Sciatic nerve (tissue), 2 donors: ENCODE measurements at regions of chr17 and their contacts with region 1.

Region 1: GRCh38 chr17:2029911-2030778 is at the start of gene DPH1:
- DNase-seq: peak; percentile 95
- ATAC-seq: peak; percentile 93
- total RNA-seq, gene DPH1: 37.7 TPM

Region 2: DNA sequence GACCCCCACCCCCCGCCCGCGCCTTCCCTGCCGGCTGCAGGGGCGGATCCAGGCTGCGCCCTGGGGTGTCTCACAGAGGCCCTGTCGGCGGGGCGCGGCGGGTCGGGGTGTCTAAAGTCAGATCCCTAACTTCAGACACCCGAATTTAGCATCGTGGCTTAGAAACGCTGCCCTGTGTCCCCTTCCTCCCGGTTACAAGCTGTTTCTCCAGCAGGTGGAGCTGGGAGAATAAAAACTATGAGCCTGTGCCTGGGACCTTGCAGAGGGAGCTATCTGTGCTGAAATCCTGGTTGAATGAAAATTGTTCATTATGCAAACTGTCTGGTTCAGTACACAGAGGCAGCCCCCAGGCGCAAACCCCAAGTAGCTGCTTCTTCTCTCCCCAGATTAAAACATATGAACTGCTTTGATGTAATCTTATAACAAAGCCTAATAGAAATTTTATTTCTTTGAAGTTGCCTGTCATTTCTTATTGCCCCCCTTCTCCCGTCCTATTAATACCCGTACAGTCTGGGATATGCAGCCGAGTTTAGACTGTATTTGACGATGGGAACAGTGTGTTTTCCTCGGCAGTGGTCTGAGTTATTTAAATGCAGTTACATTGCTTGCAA is 121.3 kb before region 1 on chr17:
- intact Hi-C with region 1: loop called (anchors 10 kb)
- DNase-seq: peak; percentile 72
- ATAC-seq: peak; percentile 93